Panc1 (cell line): ENCODE measurements at regions of chr22 and their contacts with region 1.

Region 1: GRCh38 chr22:33065230-33065629 is 7.0 kb upstream of the SYN3 start:
- DNase-seq: no peak
- ATAC-seq: no peak
- H3K4me3 ChIP-seq: no peak overlapping the region
- H3K27ac ChIP-seq: no peak overlapping the region
- H3K4me1 ChIP-seq: no peaks in the 10 kb centered on the region
- H3K27me3 ChIP-seq: no peaks in the 10 kb centered on the region
- CTCF ChIP-seq: no peak

Region 2: DNA sequence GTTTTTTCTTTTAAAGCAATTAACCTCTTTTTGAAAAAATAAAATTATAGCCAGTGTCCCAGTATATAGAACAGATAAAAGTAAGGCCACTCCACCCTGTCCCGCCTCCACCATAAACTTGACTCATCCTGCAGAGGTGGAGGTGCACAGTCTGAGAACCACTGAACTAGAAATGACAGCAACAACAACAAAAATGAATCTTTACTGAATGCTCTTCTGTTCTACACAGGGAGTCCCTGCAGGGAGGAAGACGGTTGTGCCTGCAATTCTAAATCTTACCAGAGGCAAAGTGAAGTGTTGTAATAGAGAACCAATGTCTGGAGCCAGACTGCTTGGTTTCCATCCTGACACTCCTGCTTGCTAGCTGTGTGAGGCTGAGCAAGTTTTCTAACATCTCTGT is 428.3 kb before region 1 on chr22:
- CTCF ChIA-PET with region 1: interaction called, 11 read pairs
- POLR2A ChIA-PET with region 1: no interaction called
- in situ Hi-C with region 1: no loop called
- intact Hi-C with region 1: no loop called
- DNase-seq: no peak
- ATAC-seq: no peak
- H3K4me3 ChIP-seq: no peak overlapping the region
- H3K27ac ChIP-seq: no peak overlapping the region
- H3K4me1 ChIP-seq: no peaks in the 10 kb centered on the region
- H3K27me3 ChIP-seq: no peaks in the 10 kb centered on the region
- CTCF ChIP-seq: no peak